ENCODE measurements at regions of chr2 and their contacts with region 1.

Region 1: DNA sequence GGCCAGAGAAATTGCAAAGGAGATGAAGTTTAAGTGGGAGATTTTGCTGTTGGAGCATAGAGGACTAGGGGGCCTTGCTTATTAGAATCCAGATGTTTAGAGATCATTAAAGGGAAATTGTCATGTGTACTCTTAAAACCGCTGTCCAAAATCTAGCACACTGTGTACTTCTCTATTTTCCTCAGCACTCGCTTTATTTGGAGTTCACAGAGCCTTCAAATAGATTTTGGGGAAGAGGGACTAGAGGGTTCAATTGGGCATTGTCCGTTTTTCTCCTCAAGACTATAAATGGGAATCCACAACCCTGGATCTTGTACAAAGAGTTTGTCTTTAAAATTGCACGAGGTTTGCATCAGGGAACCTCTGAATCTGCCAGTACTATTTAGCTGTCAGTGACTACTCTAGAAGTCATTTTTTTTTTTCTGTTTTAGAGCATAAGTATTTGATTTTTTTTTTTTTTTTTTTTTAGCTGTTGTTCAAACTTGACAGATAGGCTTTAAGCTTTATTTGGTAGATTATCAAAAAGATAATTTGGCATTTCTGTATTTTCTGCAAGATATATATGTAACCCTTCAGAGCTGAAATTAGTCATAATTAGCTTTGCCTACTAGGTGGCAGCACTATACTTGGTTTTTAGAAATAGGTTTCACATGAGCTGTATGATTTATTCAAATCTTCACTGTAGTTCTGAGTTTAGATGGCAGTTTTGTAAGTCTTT is 14.2 kb downstream of the PMS1 start:
- DNase-seq: peak; percentile 25
- ATAC-seq: peak; percentile 96
- H3K4me3 ChIP-seq: no peak overlapping the region
- H3K27ac ChIP-seq: no peak overlapping the region
- H3K4me1 ChIP-seq: no peaks in the 10 kb centered on the region
- H3K27me3 ChIP-seq: no peaks in the 10 kb centered on the region
- CTCF ChIP-seq: peak; percentile 34 to 60 (median 48); a peak in 5 of 6 replicates
- EP300 ChIP-seq: no peak
- POLR2A ChIP-seq: no peak
- RAD21 ChIP-seq: peak; percentile 77

Region 2: GRCh38 chr2:189783927-189784867 is 14.3 kb before region 1 on chr2 and contains the starts of genes ORMDL1 and PMS1:
- CTCF ChIA-PET with region 1: interaction called, 45 read pairs
- POLR2A ChIA-PET with region 1: interaction called, 7 read pairs
- RAD21 ChIA-PET with region 1: interaction called, 9 read pairs
- SMC1A ChIA-PET with region 1: interaction called, 15 read pairs
- in situ Hi-C with region 1: no loop called
- intact Hi-C with region 1: no loop called
- DNase-seq: peak; percentile 86
- ATAC-seq: peak; percentile 95
- H3K4me3 ChIP-seq: peak within 1 kb of the TSS; percentile 86
- H3K27ac ChIP-seq: peak within 1 kb of the TSS; percentile 92
- H3K4me1 ChIP-seq: peaks cover 4% of the 10 kb centered on the region; the same call in 1 of the 2 replicates
- H3K27me3 ChIP-seq: no peaks in the 10 kb centered on the region
- CTCF ChIP-seq: no peak
- EP300 ChIP-seq: 0 out of 4 replicates have a peak, but pooled peaks of 1 of the 2 experiments have one; percentile 27
- POLR2A ChIP-seq: peak; percentile 99
- RAD21 ChIP-seq: no peak
- polyA plus RNA-seq, gene ORMDL1: 68.9 to 89.5 TPM
- polyA plus RNA-seq, gene PMS1: 18.7 to 19.2 TPM

Region 3: GRCh38 chr2:190197143-190197720 is 398.8 kb after region 1 on chr2:
- CTCF ChIA-PET with region 1: no interaction called
- POLR2A ChIA-PET with region 1: no interaction called
- RAD21 ChIA-PET with region 1: no interaction called
- SMC1A ChIA-PET with region 1: no interaction called
- in situ Hi-C with region 1: no loop called
- intact Hi-C with region 1: no loop called
- DNase-seq: no peak
- ATAC-seq: no peak
- H3K4me3 ChIP-seq: no peak overlapping the region
- H3K27ac ChIP-seq: no peak overlapping the region
- H3K4me1 ChIP-seq: no peaks in the 10 kb centered on the region
- H3K27me3 ChIP-seq: no peaks in the 10 kb centered on the region
- CTCF ChIP-seq: no peak
- EP300 ChIP-seq: no peak
- POLR2A ChIP-seq: no peak
- RAD21 ChIP-seq: no peak

Measured in GM12878 (cell line).